MCF 10A (cell line): ENCODE measurements at regions of chr13 and their contacts with region 1.

Region 1: GRCh38 chr13:97855570-97856303 is 97.7 kb upstream of the IPO5 start:
- DNase-seq: peak; percentile 76
- H3K4me3 Mint-ChIP-seq: no peak overlapping the region
- H3K27ac Mint-ChIP-seq: no peak overlapping the region
- H3K4me1 Mint-ChIP-seq: peaks cover 9% of the 10 kb centered on the region
- H3K27me3 Mint-ChIP-seq: no peaks in the 10 kb centered on the region
- CTCF ChIP-seq: peak; percentile 88

Region 2: GRCh38 chr13:97786510-97786909 is 69.2 kb before region 1 on chr13:
- CTCF ChIA-PET with region 1: no interaction called
- POLR2A ChIA-PET with region 1: no interaction called
- intact Hi-C with region 1: no loop called
- DNase-seq: peak; percentile 26
- H3K4me3 Mint-ChIP-seq: no peak overlapping the region
- H3K27ac Mint-ChIP-seq: peak overlapping the region; percentile 89
- H3K4me1 Mint-ChIP-seq: peaks cover 27% of the 10 kb centered on the region
- H3K27me3 Mint-ChIP-seq: no peaks in the 10 kb centered on the region
- CTCF ChIP-seq: no peak

Region 3: DNA sequence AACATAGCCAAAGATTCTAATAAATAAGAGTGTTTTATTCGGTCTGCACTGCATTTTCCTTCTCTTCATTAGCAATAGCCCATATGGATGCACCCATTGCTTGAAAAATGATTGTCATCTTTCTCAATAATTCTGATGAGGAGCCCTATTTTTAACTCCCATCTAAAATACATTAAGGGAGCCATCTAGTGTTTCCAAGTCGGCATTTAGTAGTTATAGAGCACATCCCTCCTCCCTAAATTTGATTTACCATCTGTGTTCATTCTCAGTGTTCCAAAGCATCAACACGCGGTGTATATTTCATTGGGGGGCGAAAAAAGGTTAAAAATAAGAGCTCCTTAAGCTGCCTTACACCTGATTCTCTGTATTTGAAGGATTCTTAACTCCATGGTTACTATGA is 21.5 kb before region 1 on chr13:
- CTCF ChIA-PET with region 1: interaction called, 11 read pairs
- POLR2A ChIA-PET with region 1: no interaction called
- intact Hi-C with region 1: no loop called
- DNase-seq: peak; percentile 9
- H3K4me3 Mint-ChIP-seq: no peak overlapping the region
- H3K27ac Mint-ChIP-seq: no peak overlapping the region
- H3K4me1 Mint-ChIP-seq: no peaks in the 10 kb centered on the region
- H3K27me3 Mint-ChIP-seq: peaks cover 23% of the 10 kb centered on the region
- CTCF ChIP-seq: no peak

Region 4: GRCh38 chr13:97911311-97912128 is 55.8 kb after region 1 on chr13:
- CTCF ChIA-PET with region 1: interaction called, 6 read pairs
- POLR2A ChIA-PET with region 1: no interaction called
- intact Hi-C with region 1: loop called (anchors 1 kb)
- DNase-seq: peak; percentile 46
- H3K4me3 Mint-ChIP-seq: no peak overlapping the region
- H3K27ac Mint-ChIP-seq: no peak overlapping the region
- H3K4me1 Mint-ChIP-seq: no peaks in the 10 kb centered on the region
- H3K27me3 Mint-ChIP-seq: no peaks in the 10 kb centered on the region
- CTCF ChIP-seq: peak; percentile 21

Region 5: DNA sequence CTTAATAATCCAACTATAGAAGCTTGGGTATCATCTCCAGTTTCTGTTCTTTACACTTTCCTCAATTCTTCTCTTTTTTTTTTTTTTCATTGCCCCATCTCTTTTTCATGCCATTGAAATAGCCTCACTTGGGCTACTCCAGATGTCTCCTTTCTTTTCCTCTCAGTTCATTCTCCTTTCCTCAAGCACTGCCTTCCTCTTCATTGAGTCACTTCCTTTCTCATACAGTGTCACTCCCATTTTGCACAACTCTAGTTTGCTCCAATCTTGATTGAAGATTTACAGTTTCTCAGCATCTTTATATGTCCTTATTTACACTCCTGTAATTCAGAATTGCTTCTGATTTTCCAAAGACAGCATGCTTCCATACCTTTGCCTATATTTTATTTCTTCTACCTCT is 159.0 kb after region 1 on chr13:
- CTCF ChIA-PET with region 1: no interaction called
- POLR2A ChIA-PET with region 1: no interaction called
- intact Hi-C with region 1: loop called (anchors 5 kb)
- DNase-seq: peak; percentile 43
- H3K4me3 Mint-ChIP-seq: no peak overlapping the region
- H3K27ac Mint-ChIP-seq: peak overlapping the region; percentile 5
- H3K4me1 Mint-ChIP-seq: peaks cover 7% of the 10 kb centered on the region
- H3K27me3 Mint-ChIP-seq: no peaks in the 10 kb centered on the region
- CTCF ChIP-seq: no peak

Region 6: GRCh38 chr13:98429977-98430736 is 574.4 kb after region 1 on chr13:
- CTCF ChIA-PET with region 1: interaction called, 15 read pairs
- POLR2A ChIA-PET with region 1: no interaction called
- intact Hi-C with region 1: no loop called
- DNase-seq: no peak
- H3K4me3 Mint-ChIP-seq: no peak overlapping the region
- H3K27ac Mint-ChIP-seq: no peak overlapping the region
- H3K4me1 Mint-ChIP-seq: no peaks in the 10 kb centered on the region
- H3K27me3 Mint-ChIP-seq: no peaks in the 10 kb centered on the region
- CTCF ChIP-seq: no peak

Region 7: DNA sequence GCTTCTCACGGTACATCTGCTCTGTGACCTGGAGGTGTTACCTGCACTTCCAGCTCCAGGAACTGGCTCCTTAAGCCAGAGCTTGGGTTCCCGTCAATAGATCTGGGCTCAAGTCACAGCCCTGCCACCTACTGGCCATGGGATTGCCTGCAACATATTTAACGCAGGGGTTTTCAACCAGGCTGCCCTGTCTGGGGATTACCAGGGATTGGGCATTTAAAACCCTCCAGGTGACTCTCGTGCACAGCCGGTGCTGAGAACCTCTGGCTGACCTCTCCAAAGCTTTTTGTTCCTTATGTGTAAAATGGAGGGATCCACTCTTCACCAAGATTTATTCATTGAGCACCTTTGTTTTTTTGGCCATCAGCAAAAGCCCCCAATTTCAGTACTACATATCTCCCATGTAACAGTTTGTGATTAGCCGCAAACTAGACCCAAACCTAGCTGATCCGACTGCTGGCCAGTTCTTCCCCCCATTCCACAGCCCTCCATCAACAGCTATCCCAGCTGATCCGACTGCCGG is 797.8 kb after region 1 on chr13:
- CTCF ChIA-PET with region 1: interaction called, 13 read pairs
- POLR2A ChIA-PET with region 1: interaction called, 3 read pairs
- intact Hi-C with region 1: no loop called
- DNase-seq: peak; percentile 85
- H3K4me3 Mint-ChIP-seq: no peak overlapping the region
- H3K27ac Mint-ChIP-seq: no peak overlapping the region
- H3K4me1 Mint-ChIP-seq: peaks cover 5% of the 10 kb centered on the region
- H3K27me3 Mint-ChIP-seq: peaks cover 11% of the 10 kb centered on the region
- CTCF ChIP-seq: peak; percentile 71

Region 8: GRCh38 chr13:98842864-98843481 is 987.2 kb after region 1 on chr13:
- CTCF ChIA-PET with region 1: interaction called, 6 read pairs
- POLR2A ChIA-PET with region 1: no interaction called
- intact Hi-C with region 1: loop called (anchors 10 kb)
- DNase-seq: peak; percentile 67
- H3K4me3 Mint-ChIP-seq: no peak overlapping the region
- H3K27ac Mint-ChIP-seq: no peak overlapping the region
- H3K4me1 Mint-ChIP-seq: no peaks in the 10 kb centered on the region
- H3K27me3 Mint-ChIP-seq: no peaks in the 10 kb centered on the region
- CTCF ChIP-seq: peak; percentile 83